ENCODE measurements at regions of chr6 and their contacts with region 1.

Region 1: GRCh38 chr6:34145161-34146020 is 496 bp downstream of the GRM4 start:
- DNase-seq: no peak
- H3K4me3 ChIP-seq: peak overlapping the region; percentile 21 to 65 (median 38)
- H3K27ac ChIP-seq: no peak overlapping the region
- H3K4me1 ChIP-seq: peaks cover 21 to 40% (median 28%) of the 10 kb centered on the region in 3 donors
- H3K27me3 ChIP-seq: peaks cover 21 to 96% (median 30%) of the 10 kb centered on the region in 4 donors
- CTCF ChIP-seq: peak in 1 of 6 experiments; percentile 6
- POLR2A ChIP-seq: no peak

Region 2: GRCh38 chr6:33779290-33779689 is 366.1 kb before region 1 on chr6:
- intact Hi-C with region 1: no loop called
- DNase-seq: no peak
- H3K4me3 ChIP-seq: no peak overlapping the region
- H3K27ac ChIP-seq: no peak overlapping the region
- H3K4me1 ChIP-seq: peaks cover 0 to 28% (median 5%) of the 10 kb centered on the region in 3 donors
- H3K27me3 ChIP-seq: no peaks in the 10 kb centered on the region
- CTCF ChIP-seq: no peak
- POLR2A ChIP-seq: no peak

Region 3: GRCh38 chr6:34055223-34055933 is 90.0 kb before region 1 on chr6:
- intact Hi-C with region 1: loop called (anchors 10 kb)
- DNase-seq: no peak
- H3K4me3 ChIP-seq: no peak overlapping the region
- H3K27ac ChIP-seq: no peak overlapping the region
- H3K4me1 ChIP-seq: peaks cover 5 to 38% (median 7%) of the 10 kb centered on the region in 3 donors
- H3K27me3 ChIP-seq: peaks cover 0 to 60% (median 0%) of the 10 kb centered on the region in 4 donors
- CTCF ChIP-seq: peak; percentile 35 to 78 (median 56)
- POLR2A ChIP-seq: no peak

Measured in esophagus squamous epithelium (tissue), 5 donors.